ENCODE measurements at regions of chr10 and their contacts with region 1.

Region 1: DNA sequence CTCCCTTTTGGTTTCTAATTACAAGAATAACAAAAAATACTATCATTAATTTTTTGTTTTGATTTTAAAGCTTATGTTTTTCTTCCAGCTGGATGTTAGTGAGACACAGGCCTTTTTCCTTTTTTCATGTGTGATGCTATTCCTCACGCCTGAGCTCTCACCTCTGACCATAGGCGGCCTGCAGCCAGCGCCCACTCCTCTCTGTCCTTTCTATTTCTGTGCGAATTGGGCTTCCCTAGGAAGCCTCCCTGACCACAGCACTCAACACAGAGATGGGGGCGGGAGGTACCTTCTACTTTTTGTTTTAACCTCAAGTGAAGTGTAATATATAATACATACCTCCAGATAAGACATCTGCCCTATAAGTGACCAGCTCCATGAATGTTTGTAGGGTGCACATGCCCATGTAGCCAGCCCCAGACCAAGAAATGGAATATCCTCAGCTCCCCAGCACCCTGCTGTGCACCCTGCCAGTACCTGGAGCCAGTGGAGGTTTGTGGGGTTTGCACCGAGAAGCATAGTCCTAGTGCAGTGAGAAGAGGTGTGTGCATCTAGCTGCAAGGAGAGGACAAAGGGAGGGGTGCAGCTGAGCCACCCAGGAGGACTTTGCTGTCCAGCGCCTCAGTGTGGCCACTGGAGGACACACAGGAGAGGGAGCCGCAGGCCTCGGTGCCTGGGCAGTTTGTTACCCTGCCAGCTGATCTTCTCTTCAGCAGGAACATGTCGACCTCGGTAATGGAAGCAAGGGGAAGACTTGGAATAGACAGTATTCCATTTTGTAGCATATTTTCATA is 38.5 kb downstream of the BNIP3 start:
- DNase-seq: no peak
- CTCF ChIP-seq: peak; percentile 32

Region 2: GRCh38 chr10:131981429-131982184 is 38.4 kb after region 1 on chr10 and contains the start of gene BNIP3:
- CTCF ChIA-PET with region 1: interaction called, 11 read pairs
- POLR2A ChIA-PET with region 1: no interaction called
- DNase-seq: peak; percentile 99
- CTCF ChIP-seq: no peak